ENCODE measurements at regions of chr1 and their contacts with region 1.

Region 1: DNA sequence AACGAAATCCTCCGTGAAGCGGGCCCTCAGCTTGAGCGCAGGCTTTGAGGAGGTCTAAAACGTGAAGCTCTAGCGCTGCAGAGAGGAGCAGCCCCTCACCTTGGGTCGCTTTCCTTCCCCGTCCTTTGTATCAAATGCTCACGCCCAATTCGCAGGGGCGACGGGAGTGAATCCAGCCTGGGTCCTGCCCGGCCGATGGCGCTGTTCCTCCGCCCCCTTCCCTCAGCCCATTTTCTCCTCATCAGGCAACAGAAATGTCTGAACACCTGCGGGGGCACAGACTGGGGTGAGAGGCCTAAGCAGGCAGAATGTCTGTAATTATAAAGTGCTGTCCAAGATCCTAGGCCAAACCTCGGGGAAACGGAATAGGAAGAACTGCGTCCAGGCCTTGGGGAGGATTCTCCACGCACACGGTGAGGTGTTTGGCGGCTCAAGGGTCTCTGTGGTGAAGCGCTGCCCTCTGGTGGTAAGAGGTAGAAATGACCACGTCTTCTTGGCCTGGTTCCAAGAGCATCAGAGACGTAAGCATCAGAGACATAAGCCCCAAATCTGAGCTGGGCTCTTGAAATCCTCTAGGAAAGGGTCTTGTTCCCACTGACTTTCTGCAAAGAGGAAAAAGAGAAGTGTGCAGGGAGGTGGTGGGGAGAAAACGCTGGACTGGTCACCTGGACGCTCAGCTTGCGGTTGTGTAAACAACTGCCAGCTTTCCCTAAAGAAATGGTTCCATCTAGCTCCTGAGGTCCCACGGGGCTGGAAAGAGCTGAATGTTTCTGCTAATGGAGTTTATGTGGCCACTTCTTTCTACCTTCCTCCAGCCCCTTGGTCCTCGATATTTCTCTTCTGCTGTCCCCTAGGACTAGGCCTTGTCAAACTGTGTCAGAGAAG is 92.1 kb upstream of the CD53 start:
- DNase-seq: peak; percentile 79
- CTCF ChIP-seq: peak; percentile 79

Region 2: GRCh38 chr1:110554871-110555801 is 225.7 kb before region 1 on chr1:
- CTCF ChIA-PET with region 1: interaction called, 10 read pairs
- POLR2A ChIA-PET with region 1: no interaction called
- DNase-seq: peak; percentile 78
- CTCF ChIP-seq: peak; percentile 63

Region 3: GRCh38 chr1:110645821-110646735 is 134.8 kb before region 1 on chr1:
- CTCF ChIA-PET with region 1: interaction called, 10 read pairs
- POLR2A ChIA-PET with region 1: no interaction called
- DNase-seq: no peak
- CTCF ChIP-seq: no peak

Region 4: DNA sequence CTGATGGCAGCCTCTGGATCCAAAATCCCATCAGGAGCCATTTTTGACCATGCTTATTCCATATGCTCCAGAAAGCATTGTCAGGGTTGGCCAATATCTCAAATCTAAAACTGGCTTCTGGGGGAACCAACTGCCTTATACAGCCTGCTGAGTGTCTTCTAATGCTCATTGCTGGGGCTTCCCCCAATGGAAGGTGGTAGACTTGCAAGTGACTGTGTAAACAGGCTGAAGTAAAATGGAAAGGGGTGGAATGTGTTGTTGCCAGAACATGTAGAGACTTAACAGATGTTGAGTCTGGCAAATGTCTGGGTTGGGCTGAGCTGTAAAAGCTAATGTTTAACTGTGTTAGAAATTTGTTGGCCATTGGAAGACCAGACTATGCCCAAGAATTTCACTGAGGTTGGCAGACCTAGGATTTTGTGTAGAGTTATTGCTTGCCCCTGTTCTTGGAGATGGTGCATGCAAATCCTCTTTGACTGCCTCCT is 205.6 kb after region 1 on chr1:
- CTCF ChIA-PET with region 1: interaction called, 14 read pairs
- POLR2A ChIA-PET with region 1: no interaction called
- DNase-seq: no peak
- CTCF ChIP-seq: no peak

Region 5: GRCh38 chr1:111281411-111281810 is 500.6 kb after region 1 on chr1:
- CTCF ChIA-PET with region 1: no interaction called
- POLR2A ChIA-PET with region 1: no interaction called
- DNase-seq: no peak
- CTCF ChIP-seq: no peak

Measured in GM10248 (cell line).